Breast epithelium (tissue), 4 donors: ENCODE measurements at regions of chr14 and their contacts with region 1.

Region 1: GRCh38 chr14:90399541-90400444 is 3.0 kb downstream of the CALM1 start:
- DNase-seq: peak; percentile 85 to 90
- H3K4me3 ChIP-seq: peak overlapping the region; percentile 93 to 97 (median 96)
- H3K27ac ChIP-seq: peak overlapping the region; percentile 94 to 96
- H3K4me1 ChIP-seq: peaks cover 0 to 6% of the 10 kb centered on the region in 2 donors
- H3K27me3 ChIP-seq: no peaks in the 10 kb centered on the region
- CTCF ChIP-seq: peak; percentile 81 to 99 (median 99)
- POLR2A ChIP-seq: no peak

Region 2: DNA sequence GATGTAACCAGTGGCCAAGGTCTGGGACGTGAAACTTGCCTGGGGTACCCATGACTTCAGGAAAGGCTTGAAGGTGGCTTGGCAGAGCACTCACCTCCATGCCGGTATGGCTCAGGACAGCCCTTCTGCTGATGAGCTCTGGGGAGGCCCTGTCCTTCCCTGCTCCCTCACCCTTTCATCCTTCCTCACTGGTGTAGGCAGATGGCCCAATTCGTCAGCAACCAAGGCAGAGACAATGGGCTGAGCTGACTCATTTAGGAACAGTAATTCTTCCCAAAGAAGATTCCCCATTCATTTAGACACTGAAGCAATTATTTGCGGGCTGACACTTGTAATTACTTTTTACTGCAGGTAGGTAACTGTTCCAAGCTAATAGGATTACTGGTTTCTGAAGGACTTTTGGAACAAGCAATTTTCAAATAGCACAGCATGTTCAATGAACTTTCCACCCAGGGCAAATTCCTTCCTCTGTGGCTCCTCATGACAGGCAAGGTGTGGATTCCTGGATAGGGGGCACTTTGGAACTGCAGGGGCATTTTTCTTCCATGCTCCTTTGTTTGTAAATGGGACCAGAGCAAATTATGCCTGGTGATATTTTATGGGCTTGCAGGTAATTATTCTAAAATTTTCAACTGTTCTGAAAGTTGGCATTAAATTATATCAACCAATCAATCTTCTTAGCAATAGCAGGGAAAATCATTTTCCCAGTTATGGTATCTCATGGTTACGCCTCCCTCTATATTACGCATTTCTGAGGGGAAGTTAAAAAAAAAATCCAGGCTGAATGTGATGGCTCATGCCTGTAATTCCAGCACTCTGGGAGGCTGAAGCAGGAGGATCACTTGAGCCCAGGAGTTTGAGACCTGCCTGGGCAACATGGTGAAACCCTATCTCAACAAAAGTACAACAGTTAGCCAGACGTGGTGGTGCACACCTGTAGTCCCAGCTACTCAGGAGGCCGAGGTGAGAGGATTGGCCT is 44.0 kb before region 1 on chr14:
- intact Hi-C with region 1: no loop called
- DNase-seq: no peak
- H3K4me3 ChIP-seq: no peak overlapping the region
- H3K27ac ChIP-seq: no peak overlapping the region
- H3K4me1 ChIP-seq: no peaks in the 10 kb centered on the region
- H3K27me3 ChIP-seq: no peaks in the 10 kb centered on the region
- CTCF ChIP-seq: no peak
- POLR2A ChIP-seq: no peak

Region 3: DNA sequence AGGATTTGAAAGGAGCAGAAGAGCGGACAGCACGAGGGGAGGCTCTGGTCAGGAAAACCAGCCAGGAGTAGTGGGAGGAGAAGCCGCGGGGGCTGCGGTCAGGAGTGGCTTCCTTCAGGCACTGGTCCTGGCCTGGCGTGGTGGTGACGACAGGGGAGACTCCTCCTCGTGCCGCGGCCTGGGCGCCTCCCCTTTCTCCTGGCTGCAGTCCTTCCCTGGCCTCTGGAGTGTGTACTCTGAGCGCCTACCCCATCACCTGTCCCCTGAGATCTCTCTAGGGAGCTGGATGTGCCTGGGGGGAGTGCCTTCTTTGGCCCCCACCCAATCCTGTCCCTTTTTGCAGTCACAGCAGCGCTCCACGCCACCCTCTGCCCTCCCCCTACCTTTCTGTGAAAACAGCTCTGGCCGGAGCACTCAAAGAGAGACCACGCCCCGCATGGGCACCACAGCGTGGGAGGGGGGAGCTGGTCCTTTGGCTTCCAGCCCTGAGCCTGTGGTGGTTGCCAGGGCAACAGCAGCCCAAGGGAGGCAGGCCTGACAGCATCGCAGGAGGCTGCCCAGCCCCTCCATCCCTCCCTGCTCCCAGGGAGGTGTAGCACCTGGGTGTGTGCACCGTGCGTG is 122.9 kb after region 1 on chr14:
- intact Hi-C with region 1: loop called (anchors 5 kb)
- DNase-seq: peak; percentile 72 to 81
- H3K4me3 ChIP-seq: peak overlapping the region in 2 of 3 donors; percentile 16 to 25
- H3K27ac ChIP-seq: peak overlapping the region; percentile 65 to 74
- H3K4me1 ChIP-seq: peaks cover 4 to 26% of the 10 kb centered on the region in 2 donors
- H3K27me3 ChIP-seq: no peaks in the 10 kb centered on the region
- CTCF ChIP-seq: no peak
- POLR2A ChIP-seq: no peak

Region 4: DNA sequence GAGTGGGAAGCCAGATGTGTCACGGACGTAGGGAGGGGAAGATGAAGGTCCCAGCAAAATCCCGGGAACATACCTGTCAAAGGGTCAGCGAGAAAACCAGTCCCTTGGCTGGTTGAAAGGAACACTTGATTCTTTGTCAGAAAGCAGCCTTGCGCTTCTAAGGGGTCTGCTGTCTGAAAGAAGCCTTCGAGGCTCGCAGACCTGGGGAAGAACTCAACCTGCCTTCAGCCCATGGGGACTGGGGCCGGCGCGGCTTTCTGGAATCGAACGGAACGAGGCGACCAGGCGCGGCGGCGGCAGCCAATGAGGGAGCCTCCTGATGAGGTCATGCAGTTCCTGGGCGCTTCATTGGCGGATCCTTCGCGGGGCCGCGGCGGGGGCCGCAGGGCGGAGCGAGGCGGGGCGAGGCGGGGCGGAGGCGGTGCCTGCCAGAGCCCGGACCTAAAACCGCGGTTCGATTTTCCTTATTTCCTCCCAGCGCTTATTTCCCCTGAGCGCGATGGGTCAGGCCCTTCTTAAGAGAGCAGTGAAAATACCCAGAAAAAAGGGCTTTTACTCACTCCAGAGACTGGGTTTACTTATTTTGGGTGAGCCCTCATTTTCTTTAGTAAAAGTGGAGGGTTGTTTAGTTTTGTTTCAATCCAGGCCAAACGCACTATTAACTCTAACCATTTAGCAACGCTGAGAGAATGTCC is 428.3 kb after region 1 on chr14:
- intact Hi-C with region 1: no loop called
- DNase-seq: peak; percentile 91 to 93
- H3K4me3 ChIP-seq: peak overlapping the region; percentile 23 to 61 (median 48)
- H3K27ac ChIP-seq: peak overlapping the region; percentile 57 to 65
- H3K4me1 ChIP-seq: no peaks in the 10 kb centered on the region
- H3K27me3 ChIP-seq: no peaks in the 10 kb centered on the region
- CTCF ChIP-seq: no peak
- POLR2A ChIP-seq: no peak